Activated CD4-positive, alpha-beta T cell treated with anti-CD3 and anti-CD28 coated beads, Interleukin-2, amount 10 ng/mL, durations not matched to agents 7 days and 5 days (primary cell): ENCODE measurements at regions of chr3 and their contacts with region 1.

Region 1: DNA sequence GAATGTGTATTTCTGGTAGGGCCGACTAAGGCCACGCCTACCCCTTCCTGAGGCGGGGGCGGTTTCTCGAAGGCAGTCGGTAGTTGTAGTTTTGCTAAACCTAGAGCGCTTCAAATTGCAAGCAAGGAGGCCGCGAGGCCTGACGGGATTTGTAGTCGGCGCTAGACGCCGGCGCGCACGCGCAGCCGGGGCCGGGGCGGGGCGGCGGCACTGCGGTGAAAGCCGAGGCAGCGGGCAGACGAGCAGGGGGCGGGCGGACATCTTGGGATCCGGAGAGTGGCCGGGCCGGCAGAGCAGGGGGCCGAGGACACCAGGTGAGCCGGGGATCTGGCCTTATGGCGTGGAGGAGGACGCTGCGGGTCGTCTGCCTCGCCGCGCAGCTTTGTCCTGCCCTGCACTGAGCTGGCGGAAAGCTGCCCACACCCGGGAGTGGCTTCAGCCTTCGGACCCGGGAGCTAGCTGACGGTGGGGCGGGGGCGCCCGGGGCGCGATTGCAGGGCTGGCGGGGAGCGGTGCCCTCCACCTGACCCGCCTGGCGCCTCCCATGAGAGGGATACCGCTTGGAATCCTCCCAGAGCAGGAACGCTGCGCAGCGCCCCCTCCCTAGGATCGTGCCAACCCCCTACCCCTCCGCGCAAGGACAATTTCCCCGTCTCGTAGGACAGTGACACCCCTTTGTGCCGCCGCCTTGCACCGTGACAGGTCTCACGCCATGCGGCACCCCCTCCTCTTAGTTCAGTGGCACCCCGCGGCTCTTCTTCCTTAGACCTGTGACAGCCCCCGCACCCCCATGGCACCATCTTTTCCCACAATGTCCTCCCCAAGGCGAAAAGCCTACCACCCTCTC is at the start of gene AP2M1:
- DNase-seq: peak; percentile 98
- H3K4me3 Mint-ChIP-seq: peak within 1 kb of the TSS; percentile 91
- H3K27ac Mint-ChIP-seq: peak within 1 kb of the TSS; percentile 88
- H3K4me1 Mint-ChIP-seq: peaks cover 39% of the 10 kb centered on the region
- H3K27me3 Mint-ChIP-seq: no peaks in the 10 kb centered on the region
- total RNA-seq, gene AP2M1: 222 to 223 TPM

Region 2: GRCh38 chr3:184135149-184135910 is 39.5 kb before region 1 on chr3 and contains the start of gene EIF2B5:
- CTCF ChIA-PET with region 1: no interaction called
- POLR2A ChIA-PET with region 1: no interaction called
- DNase-seq: peak; percentile 91
- H3K4me3 Mint-ChIP-seq: peak within 1 kb of the TSS; percentile 98
- H3K27ac Mint-ChIP-seq: peak within 1 kb of the TSS; percentile 96
- H3K4me1 Mint-ChIP-seq: peaks cover 34% of the 10 kb centered on the region
- H3K27me3 Mint-ChIP-seq: no peaks in the 10 kb centered on the region
- total RNA-seq, gene EIF2B5: 53.0 to 60.0 TPM

Region 3: GRCh38 chr3:184185461-184186308 is 10.8 kb after region 1 on chr3 and contains the start of gene ABCF3:
- CTCF ChIA-PET with region 1: interaction called, 22 read pairs
- POLR2A ChIA-PET with region 1: interaction called, 3 read pairs
- DNase-seq: peak; percentile 99
- H3K4me3 Mint-ChIP-seq: peak within 1 kb of the TSS; percentile 94
- H3K27ac Mint-ChIP-seq: peak within 1 kb of the TSS; percentile 94
- H3K4me1 Mint-ChIP-seq: peaks cover 36% of the 10 kb centered on the region
- H3K27me3 Mint-ChIP-seq: no peaks in the 10 kb centered on the region
- total RNA-seq, gene ABCF3: 62.2 to 64.4 TPM